Heart left ventricle (tissue), 16 donors: ENCODE measurements at regions of chr13 and their contacts with region 1.

Region 1: GRCh38 chr13:98565726-98566565 is 11.0 kb downstream of the STK24 start:
- DNase-seq: peak; percentile 46 to 78 (median 57)
- ATAC-seq: peak; percentile 77 to 92 (median 90)
- H3K4me3 ChIP-seq: peak overlapping the region in 8 of 12 donors; percentile 10 to 41 (median 26)
- H3K27ac ChIP-seq: peak overlapping the region; percentile 28 to 93 (median 78)
- H3K4me1 ChIP-seq: peaks cover 5 to 95% (median 58%) of the 10 kb centered on the region in 12 donors
- H3K27me3 ChIP-seq: no peaks in the 10 kb centered on the region
- CTCF ChIP-seq: no peak
- POLR2A ChIP-seq: peak in 1 of 2 donors; percentile 14

Region 2: GRCh38 chr13:98504371-98504963 is 61.5 kb before region 1 on chr13:
- intact Hi-C with region 1: loop called in 3 of 10 experiments (anchors 5 to 10 kb)
- DNase-seq: no peak
- ATAC-seq: no peak
- H3K4me3 ChIP-seq: peak overlapping the region in 1 of 12 donors; percentile 8
- H3K27ac ChIP-seq: peak overlapping the region in 9 of 12 donors; percentile 39 to 84 (median 65)
- H3K4me1 ChIP-seq: peaks cover 25 to 95% (median 79%) of the 10 kb centered on the region in 12 donors
- H3K27me3 ChIP-seq: no peaks in the 10 kb centered on the region
- CTCF ChIP-seq: no peak
- POLR2A ChIP-seq: no peak

Region 3: DNA sequence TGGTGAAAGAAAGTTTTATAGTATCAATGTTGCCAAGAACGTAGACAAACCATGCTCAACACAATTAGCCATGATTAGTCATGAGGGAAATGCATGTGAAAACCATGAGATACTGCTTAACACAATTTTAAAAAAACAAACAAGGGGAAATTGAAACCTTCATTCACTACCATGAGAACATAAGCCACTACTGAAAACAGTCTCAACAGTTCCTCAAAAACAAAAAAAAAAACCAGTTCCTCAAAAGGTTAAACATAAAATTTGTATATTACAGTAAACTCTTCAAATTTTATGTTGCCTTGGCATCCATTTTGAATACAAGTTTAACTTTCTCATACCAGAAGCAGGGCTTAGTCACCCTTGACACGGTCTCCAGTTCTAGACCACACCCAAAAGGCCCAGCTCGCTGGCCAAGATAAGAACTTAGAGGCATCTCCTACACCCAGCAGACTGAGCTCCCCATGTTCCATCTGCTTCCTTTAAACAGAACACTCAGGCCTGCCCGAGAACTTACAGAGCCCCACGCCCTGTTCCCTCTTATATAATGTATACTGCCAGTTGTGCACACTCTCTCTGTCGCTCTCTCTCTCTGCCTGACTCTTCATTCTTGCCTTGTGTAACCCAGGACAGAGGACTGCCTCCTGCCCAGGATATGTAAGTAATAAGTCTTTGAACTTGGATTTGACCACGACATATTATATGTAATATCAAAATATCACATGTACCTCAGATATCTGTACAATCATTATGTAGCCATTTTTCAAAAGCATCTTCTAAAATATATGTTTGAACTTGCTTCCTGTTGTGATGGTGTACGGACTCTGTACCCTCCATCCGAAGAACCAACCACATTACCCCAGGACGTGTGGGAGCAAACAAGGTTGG is 56.4 kb before region 1 on chr13:
- intact Hi-C with region 1: loop called in 4 of 10 experiments (anchors 5 to 10 kb)
- DNase-seq: peak in 3 of 5 donors; percentile 41 to 82 (median 74)
- ATAC-seq: peak; percentile 64 to 84 (median 75)
- H3K4me3 ChIP-seq: no peak overlapping the region
- H3K27ac ChIP-seq: peak overlapping the region; percentile 4 to 81 (median 42)
- H3K4me1 ChIP-seq: peaks cover 20 to 87% (median 67%) of the 10 kb centered on the region in 12 donors
- H3K27me3 ChIP-seq: no peaks in the 10 kb centered on the region
- CTCF ChIP-seq: no peak
- POLR2A ChIP-seq: no peak

Region 4: DNA sequence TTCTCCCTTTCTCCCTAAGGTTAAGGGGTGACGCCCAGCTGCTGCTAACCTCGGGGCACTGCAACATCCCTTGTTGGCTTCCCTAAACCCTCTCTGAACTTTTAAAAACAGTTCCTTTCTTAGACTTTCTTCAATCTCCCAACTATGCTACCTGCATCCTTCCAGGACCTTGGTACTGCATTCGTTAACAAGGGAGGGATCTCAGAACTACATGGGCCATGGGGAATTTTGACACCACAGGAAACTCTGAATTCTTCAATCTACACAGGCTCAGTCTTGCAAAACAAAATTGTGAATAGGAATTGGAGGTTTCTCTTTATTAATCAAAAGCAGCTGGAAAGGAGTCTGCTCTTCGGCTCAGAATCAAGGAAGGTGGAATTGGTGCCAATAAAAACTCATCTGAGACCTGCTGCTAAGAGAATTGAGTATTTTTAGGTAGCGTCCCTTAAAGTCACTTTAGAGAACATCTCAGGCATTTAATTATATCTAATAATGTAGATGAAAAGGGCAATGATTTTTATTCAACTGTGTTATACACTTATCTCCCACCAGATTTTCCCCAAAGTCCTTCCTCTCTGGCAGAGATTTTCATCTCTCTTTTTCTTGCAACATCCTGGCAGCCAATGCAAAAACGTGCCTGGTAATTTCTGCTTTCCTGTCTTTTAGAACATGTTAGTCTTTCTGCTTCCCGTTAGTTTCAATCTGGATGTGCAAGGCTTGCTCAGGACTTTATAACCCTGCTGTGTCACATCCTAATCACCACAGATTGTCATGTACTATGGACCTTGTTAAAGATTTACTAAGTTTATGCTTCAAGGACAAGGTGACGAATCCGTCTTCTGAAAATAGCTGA is 255.7 kb after region 1 on chr13:
- intact Hi-C with region 1: loop called in 1 of 10 experiments (anchors 10 kb)
- DNase-seq: no peak
- ATAC-seq: peak in 3 of 4 donors; percentile 23 to 73 (median 63)
- H3K4me3 ChIP-seq: no peak overlapping the region
- H3K27ac ChIP-seq: peak overlapping the region; percentile 33 to 77 (median 54)
- H3K4me1 ChIP-seq: peaks cover 4 to 51% (median 35%) of the 10 kb centered on the region in 12 donors
- H3K27me3 ChIP-seq: no peaks in the 10 kb centered on the region
- CTCF ChIP-seq: no peak
- POLR2A ChIP-seq: no peak